PC-3 (cell line): ENCODE measurements at regions of chr18 and their contacts with region 1.

Region 1: DNA sequence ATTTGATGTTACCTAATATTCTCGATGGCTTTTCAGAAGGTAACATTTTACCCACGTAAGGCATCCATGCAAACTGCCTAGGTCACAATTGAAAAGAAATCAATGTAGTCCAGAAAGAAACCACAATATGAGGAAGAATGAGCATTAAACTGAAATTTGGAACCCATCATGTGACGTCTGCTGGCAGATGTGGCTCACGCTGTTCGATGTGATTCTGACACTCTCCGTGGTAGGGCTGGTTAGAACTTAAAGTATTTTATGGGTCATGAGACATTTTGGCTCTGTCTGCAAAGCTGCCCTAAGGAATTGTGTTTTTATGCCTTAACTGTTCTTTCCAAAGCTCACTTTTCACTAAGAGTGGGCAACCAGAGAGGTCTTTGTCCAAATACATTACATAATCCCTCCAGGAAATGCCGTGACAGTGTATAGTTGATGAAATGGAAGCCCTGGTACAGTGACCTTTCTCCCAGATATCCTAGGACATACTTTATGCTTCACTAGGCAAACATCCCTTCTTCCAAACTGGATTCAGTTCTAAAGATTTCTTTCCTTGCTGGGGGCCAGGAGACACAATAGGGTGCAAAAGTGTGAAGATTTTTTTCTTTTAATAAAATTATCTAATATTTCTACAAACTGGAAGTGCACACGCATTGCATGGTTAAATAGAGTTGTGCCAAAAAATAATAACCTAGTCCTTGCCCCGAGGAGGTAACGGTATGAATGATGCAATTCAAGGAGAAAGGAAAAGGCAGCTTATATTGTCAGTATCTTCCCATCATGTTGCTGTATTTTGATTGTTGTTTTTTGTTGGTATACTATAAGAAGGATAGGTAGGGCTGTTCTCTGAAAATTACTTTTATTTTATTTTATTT is 119.0 kb downstream of the AQP4 start:
- DNase-seq: peak; percentile 67
- ATAC-seq: peak; percentile 58
- H3K4me3 ChIP-seq: peak overlapping the region; percentile 53
- H3K27ac ChIP-seq: peak overlapping the region; percentile 94
- H3K4me1 ChIP-seq: peaks cover 45% of the 10 kb centered on the region
- H3K27me3 ChIP-seq: no peaks in the 10 kb centered on the region
- CTCF ChIP-seq: no peak

Region 2: GRCh38 chr18:26335156-26335555 is 411.4 kb before region 1 on chr18:
- CTCF ChIA-PET with region 1: no interaction called
- POLR2A ChIA-PET with region 1: no interaction called
- intact Hi-C with region 1: no loop called
- DNase-seq: no peak
- ATAC-seq: no peak
- H3K4me3 ChIP-seq: no peak overlapping the region
- H3K27ac ChIP-seq: no peak overlapping the region
- H3K4me1 ChIP-seq: no peaks in the 10 kb centered on the region
- H3K27me3 ChIP-seq: no peaks in the 10 kb centered on the region
- CTCF ChIP-seq: no peak

Region 3: GRCh38 chr18:26480897-26481895 is 265.3 kb before region 1 on chr18:
- CTCF ChIA-PET with region 1: no interaction called
- POLR2A ChIA-PET with region 1: no interaction called
- intact Hi-C with region 1: loop called (anchors 1 kb)
- DNase-seq: peak; percentile 98
- ATAC-seq: peak; percentile 83
- H3K4me3 ChIP-seq: peak overlapping the region; percentile 48
- H3K27ac ChIP-seq: peak overlapping the region; percentile 97
- H3K4me1 ChIP-seq: peaks cover 73% of the 10 kb centered on the region
- H3K27me3 ChIP-seq: no peaks in the 10 kb centered on the region
- CTCF ChIP-seq: no peak

Region 4: GRCh38 chr18:26794230-26795101 is 48.0 kb after region 1 on chr18:
- CTCF ChIA-PET with region 1: no interaction called
- POLR2A ChIA-PET with region 1: no interaction called
- intact Hi-C with region 1: loop called (anchors 1 kb)
- DNase-seq: no peak
- ATAC-seq: no peak
- H3K4me3 ChIP-seq: no peak overlapping the region
- H3K27ac ChIP-seq: no peak overlapping the region
- H3K4me1 ChIP-seq: no peaks in the 10 kb centered on the region
- H3K27me3 ChIP-seq: no peaks in the 10 kb centered on the region
- CTCF ChIP-seq: no peak